Posterior vena cava (tissue), 2 donors: ENCODE measurements at regions of chr3 and their contacts with region 1.

Region 1: DNA sequence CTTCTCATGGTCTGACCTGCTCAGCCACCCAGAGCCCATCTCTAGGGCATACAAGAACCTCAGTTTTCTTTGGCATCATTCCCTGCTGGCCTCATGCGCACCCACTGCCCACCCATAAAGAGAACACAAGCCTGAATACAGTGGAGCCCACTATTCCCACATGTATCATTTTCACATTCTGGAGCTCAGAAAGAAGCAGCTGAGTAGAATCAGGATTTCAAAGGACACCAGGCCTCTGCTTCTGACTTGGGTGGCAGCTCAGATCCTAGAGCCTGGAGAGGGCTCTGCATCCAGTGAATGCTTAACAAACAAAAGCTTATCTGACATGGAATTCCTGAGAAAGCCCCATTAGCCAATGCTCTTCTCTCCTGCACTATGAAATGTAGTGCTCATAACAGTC is 34.7 kb downstream of the RBP2 start:
- DNase-seq: no peak

Region 2: GRCh38 chr3:139281522-139282196 is 160.0 kb before region 1 on chr3:
- intact Hi-C with region 1: loop called in 1 of 2 experiments (anchors 2 kb)
- DNase-seq: peak; percentile 62